ENCODE measurements at regions of chr12 and their contacts with region 1.

Region 1: GRCh38 chr12:2944401-2945047 is 14.7 kb upstream of the TEAD4 start:
- H3K4me3 Mint-ChIP-seq: no peak overlapping the region
- H3K27ac Mint-ChIP-seq: no peak overlapping the region
- H3K4me1 Mint-ChIP-seq: no peaks in the 10 kb centered on the region
- H3K27me3 Mint-ChIP-seq: peaks cover 16% of the 10 kb centered on the region

Region 2: DNA sequence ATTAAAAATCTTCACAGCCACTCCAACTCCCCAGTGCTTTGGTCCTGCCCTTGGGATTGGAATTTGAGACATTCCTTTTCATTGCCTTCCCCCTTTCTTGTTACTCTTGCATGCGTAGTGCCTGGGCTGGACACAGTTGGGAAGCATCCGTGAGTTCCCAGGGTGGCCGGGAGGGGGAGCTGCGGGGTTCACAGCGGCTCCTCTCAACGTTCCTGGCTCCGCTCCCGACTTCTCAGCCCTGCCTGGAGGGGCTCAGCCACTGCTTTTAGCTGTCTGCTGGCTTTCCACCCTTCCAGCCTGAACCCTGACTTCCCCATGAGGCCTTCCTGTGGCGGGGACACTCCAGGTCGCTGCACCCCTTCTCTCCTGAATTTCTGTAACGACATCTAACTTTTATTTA is 90.9 kb before region 1 on chr12:
- intact Hi-C with region 1: loop called (anchors 5 kb)
- H3K4me3 Mint-ChIP-seq: no peak overlapping the region
- H3K27ac Mint-ChIP-seq: no peak overlapping the region
- H3K4me1 Mint-ChIP-seq: no peaks in the 10 kb centered on the region
- H3K27me3 Mint-ChIP-seq: no peaks in the 10 kb centered on the region

Region 3: DNA sequence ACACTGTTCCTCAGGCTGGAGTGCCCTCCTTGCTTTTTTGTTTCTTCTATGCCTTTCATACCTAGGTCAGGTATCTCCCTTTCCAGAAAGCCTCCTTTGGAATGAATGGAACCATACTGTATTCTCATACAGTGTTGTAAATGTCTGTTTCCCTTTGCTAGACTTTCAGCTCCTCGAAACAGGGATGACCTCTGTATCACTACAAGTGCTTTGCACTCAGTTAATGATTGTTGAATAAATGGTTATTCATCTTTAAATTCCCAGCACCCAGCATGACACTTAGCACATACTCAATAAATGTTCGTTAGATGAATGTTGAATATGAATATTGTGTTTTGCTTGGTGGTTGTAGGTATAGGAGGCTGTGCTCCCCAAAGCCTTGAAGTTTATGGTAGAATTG is 59.7 kb before region 1 on chr12:
- intact Hi-C with region 1: loop called (anchors 2 kb)
- H3K4me3 Mint-ChIP-seq: no peak overlapping the region
- H3K27ac Mint-ChIP-seq: peak overlapping the region; percentile 66
- H3K4me1 Mint-ChIP-seq: peaks cover 32% of the 10 kb centered on the region
- H3K27me3 Mint-ChIP-seq: no peaks in the 10 kb centered on the region